Breast epithelium (tissue), 4 donors: ENCODE measurements at regions of chr2 and their contacts with region 1.

Region 1: GRCh38 chr2:136613096-136613495 is 152.2 kb upstream of the THSD7B start:
- DNase-seq: no peak
- H3K4me3 ChIP-seq: no peak overlapping the region
- H3K27ac ChIP-seq: no peak overlapping the region
- H3K4me1 ChIP-seq: no peaks in the 10 kb centered on the region
- H3K27me3 ChIP-seq: no peaks in the 10 kb centered on the region
- CTCF ChIP-seq: no peak
- POLR2A ChIP-seq: no peak

Region 2: DNA sequence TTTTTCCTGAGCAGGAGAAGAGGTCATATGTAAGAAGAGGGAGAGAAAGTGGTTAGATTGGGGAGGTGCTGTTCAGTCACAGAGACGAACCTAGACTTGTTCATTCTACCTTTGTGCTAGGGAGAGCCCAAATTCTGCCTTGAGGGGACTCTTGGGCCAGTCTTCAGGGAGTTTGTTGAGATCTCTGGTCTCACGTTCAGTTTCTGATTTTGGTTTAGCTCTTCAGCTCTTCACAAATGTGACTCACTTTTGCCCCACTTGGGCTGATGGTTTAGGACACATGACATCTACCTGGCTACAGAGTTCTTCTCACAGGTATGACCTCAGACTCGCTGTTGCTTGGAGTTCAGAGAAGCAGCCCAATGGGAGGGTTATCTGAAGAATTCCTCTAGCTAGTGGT is 578.5 kb before region 1 on chr2:
- intact Hi-C with region 1: no loop called
- DNase-seq: no peak
- H3K4me3 ChIP-seq: no peak overlapping the region
- H3K27ac ChIP-seq: no peak overlapping the region
- H3K4me1 ChIP-seq: no peaks in the 10 kb centered on the region
- H3K27me3 ChIP-seq: no peaks in the 10 kb centered on the region
- CTCF ChIP-seq: no peak
- POLR2A ChIP-seq: no peak

Region 3: GRCh38 chr2:136557203-136557602 is 55.9 kb before region 1 on chr2:
- intact Hi-C with region 1: loop called (anchors 2 kb)
- DNase-seq: no peak
- H3K4me3 ChIP-seq: no peak overlapping the region
- H3K27ac ChIP-seq: no peak overlapping the region
- H3K4me1 ChIP-seq: no peaks in the 10 kb centered on the region
- H3K27me3 ChIP-seq: no peaks in the 10 kb centered on the region
- CTCF ChIP-seq: no peak
- POLR2A ChIP-seq: no peak